Gastrocnemius medialis (tissue), 4 donors: ENCODE measurements at regions of chr2 and their contacts with region 1.

Region 1: DNA sequence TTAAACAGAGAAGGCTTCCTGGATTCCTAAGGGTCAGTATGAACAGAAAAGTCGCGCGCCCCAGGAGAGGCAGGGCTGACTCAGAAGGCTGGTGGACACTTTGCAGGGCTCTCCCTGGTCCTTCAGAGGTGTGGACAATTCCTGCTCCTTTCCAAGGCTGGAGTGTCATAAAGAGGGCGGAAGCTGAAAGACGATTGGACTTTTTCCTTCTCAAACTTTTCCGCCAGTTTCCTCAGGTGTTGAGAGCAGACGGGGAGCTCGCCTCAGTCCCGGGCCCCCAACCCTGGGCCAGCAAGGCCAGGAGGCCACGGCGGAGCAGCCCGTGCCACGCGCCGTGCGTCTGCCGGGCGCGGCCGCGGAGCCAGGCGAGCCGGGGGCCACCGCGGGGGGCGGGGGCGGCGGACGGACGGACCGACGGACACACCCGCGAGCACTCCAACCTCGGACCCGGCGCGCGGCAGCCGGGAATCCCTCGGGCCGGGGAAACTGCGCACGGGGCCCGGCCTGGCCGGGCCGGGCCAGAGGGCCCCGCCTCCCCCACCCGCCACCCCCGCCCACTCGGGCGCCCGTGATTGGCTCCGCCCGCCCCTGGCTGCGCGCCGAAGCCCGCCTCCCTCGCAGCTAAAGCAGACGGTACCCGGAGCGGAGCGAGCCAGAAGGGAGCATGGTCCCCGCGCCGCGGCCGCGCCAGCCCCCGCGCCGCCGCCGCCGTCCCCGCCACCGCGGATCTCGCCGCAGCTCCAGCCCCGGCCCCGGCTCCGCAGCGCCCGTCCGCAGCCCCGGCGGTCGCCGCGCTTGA is at the start of gene KLHL29:
- DNase-seq: peak; percentile 80 to 83
- ATAC-seq: peak; percentile 73 to 82
- H3K4me3 ChIP-seq: peak within 1 kb of the TSS; percentile 67 to 77 (median 74)
- H3K27ac ChIP-seq: peak within 1 kb of the TSS; percentile 62 to 73 (median 70)
- H3K4me1 ChIP-seq: peaks cover 7 to 22% of the 10 kb centered on the region in 2 donors
- H3K27me3 ChIP-seq: peaks cover 5 to 29% (median 14%) of the 10 kb centered on the region in 3 donors
- CTCF ChIP-seq: no peak
- POLR2A ChIP-seq: peak; percentile 72 to 73
- total RNA-seq, gene KLHL29: 4.3 to 24.9 (median 8.7) TPM

Region 2: DNA sequence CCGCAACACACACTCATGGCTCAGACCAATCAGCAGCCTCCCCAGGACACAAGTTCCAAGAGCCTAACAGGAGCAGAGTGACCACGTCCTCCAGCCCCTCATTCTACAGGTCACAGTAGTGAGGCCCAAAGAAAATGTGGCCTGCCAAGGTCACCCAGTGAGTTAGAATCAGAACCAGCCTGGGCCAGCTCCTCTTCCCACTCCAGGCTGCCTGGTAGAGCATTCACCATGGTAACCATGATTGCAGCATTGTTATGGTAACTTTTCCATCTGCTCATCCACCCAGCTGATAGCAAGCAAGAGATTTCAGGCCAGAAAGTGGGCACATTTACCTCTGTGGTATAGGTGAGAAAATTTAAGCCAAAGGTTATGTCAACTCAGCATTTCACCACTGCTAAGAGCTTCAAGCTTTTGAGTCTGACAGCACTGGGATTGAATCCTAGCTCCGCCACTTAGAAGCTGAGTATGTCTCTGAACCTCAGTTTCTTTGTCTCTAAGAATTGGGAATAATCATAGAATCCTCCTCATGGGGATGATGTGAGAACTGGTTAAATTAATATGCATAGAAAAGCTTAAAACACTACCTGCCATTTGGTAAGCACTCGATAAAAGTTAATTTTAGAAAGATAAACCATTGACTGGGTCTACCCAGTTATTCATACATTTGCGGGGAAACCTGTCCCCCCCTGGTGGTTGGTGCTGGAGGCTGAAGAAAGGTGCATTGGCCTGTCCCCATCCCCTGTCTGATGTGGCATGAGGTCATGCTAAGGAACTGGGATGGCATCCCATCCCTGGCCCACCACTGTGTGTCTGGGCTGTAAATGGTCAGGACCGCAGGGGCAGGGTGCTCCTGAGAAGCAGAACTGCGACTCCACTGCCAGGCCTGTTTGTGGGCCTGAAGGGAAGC is 181.7 kb after region 1 on chr2:
- in situ Hi-C with region 1: no loop called
- intact Hi-C with region 1: loop called (anchors 10 kb)
- DNase-seq: no peak
- ATAC-seq: no peak
- H3K4me3 ChIP-seq: no peak overlapping the region
- H3K27ac ChIP-seq: peak overlapping the region; percentile 85 to 93 (median 89)
- H3K4me1 ChIP-seq: peaks cover 41 to 63% of the 10 kb centered on the region in 2 donors
- H3K27me3 ChIP-seq: no peaks in the 10 kb centered on the region
- CTCF ChIP-seq: peak in 3 of 5 experiments; percentile 23 to 45 (median 44)
- POLR2A ChIP-seq: no peak

Region 3: GRCh38 chr2:23617167-23617810 is 232.5 kb after region 1 on chr2:
- in situ Hi-C with region 1: no loop called
- intact Hi-C with region 1: loop called (anchors 5 kb)
- DNase-seq: peak; percentile 55 to 75
- ATAC-seq: peak; percentile 71 to 86
- H3K4me3 ChIP-seq: peak overlapping the region in 3 of 4 donors; percentile 8 to 21 (median 10)
- H3K27ac ChIP-seq: peak overlapping the region; percentile 61 to 76 (median 67)
- H3K4me1 ChIP-seq: peaks cover 19 to 23% of the 10 kb centered on the region in 2 donors
- H3K27me3 ChIP-seq: no peaks in the 10 kb centered on the region
- CTCF ChIP-seq: peak; percentile 23 to 69 (median 62)
- POLR2A ChIP-seq: no peak

Region 4: GRCh38 chr2:23745726-23746105 is 361.0 kb after region 1 on chr2:
- in situ Hi-C with region 1: loop called in 1 of 4 experiments (anchors 25 kb)
- intact Hi-C with region 1: loop called (anchors 5 kb)
- DNase-seq: peak; percentile 84 to 90
- ATAC-seq: peak; percentile 97 to 98
- H3K4me3 ChIP-seq: peak overlapping the region in 2 of 4 donors; percentile 26 to 41
- H3K27ac ChIP-seq: peak overlapping the region; percentile 88 to 94 (median 90)
- H3K4me1 ChIP-seq: peaks cover 22 to 25% of the 10 kb centered on the region in 2 donors
- H3K27me3 ChIP-seq: no peaks in the 10 kb centered on the region
- CTCF ChIP-seq: no peak
- POLR2A ChIP-seq: no peak